Ascending aorta (tissue), 2 donors: ENCODE measurements at regions of chr5 and their contacts with region 1.

Region 1: GRCh38 chr5:142699184-142699720 is 13.4 kb upstream of the FGF1 start:
- DNase-seq: peak; percentile 45 to 95
- H3K4me3 ChIP-seq: no peak overlapping the region
- H3K27ac ChIP-seq: peak overlapping the region in 1 of 2 donors; percentile 73
- H3K4me1 ChIP-seq: peaks cover 3 to 30% of the 10 kb centered on the region in 2 donors
- H3K27me3 ChIP-seq: no peaks in the 10 kb centered on the region
- CTCF ChIP-seq: peak; percentile 96 to 97 (median 96)

Region 2: GRCh38 chr5:141992349-141992963 is 706.8 kb before region 1 on chr5:
- intact Hi-C with region 1: loop called (anchors 10 kb)
- DNase-seq: peak in 1 of 2 donors; percentile 83
- H3K4me3 ChIP-seq: no peak overlapping the region
- H3K27ac ChIP-seq: no peak overlapping the region
- H3K4me1 ChIP-seq: no peaks in the 10 kb centered on the region
- H3K27me3 ChIP-seq: no peaks in the 10 kb centered on the region
- CTCF ChIP-seq: peak; percentile 54 to 80 (median 72)

Region 3: DNA sequence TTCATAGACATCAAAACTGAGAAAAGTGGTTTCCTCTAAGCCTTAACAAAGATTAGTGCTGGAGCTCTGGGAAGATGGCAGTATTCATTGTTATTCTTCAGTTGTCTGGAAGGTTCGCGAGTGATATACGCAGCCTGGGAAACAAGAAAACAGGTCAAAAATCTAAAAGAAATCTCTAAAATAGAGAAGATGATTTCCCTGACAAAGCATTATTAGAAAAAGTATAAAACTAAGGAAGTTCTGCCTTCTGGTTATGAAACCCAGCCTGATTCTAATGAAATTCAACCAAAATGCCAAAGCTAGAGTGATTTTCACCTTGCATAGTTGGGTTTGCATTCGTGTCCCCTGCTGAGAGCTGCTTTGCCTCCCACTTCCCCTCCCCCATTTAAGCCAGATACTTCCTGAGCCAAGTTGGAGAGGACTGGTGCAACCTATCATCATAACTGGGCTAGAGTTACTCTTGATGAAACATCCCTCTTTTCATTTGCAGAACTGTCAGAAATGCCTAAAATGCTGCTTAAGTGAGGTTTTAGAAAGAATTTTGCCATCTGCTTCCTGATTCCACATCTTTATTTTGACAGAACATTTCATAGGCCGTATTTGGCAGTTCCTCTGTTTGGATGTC is 542.3 kb before region 1 on chr5:
- intact Hi-C with region 1: loop called (anchors 5 kb)
- DNase-seq: no peak
- H3K4me3 ChIP-seq: no peak overlapping the region
- H3K27ac ChIP-seq: no peak overlapping the region
- H3K4me1 ChIP-seq: peaks cover 0 to 7% of the 10 kb centered on the region in 2 donors
- H3K27me3 ChIP-seq: no peaks in the 10 kb centered on the region
- CTCF ChIP-seq: no peak

Region 4: GRCh38 chr5:142334538-142334937 is 364.7 kb before region 1 on chr5:
- intact Hi-C with region 1: no loop called
- DNase-seq: no peak
- H3K4me3 ChIP-seq: no peak overlapping the region
- H3K27ac ChIP-seq: no peak overlapping the region
- H3K4me1 ChIP-seq: no peaks in the 10 kb centered on the region
- H3K27me3 ChIP-seq: no peaks in the 10 kb centered on the region
- CTCF ChIP-seq: no peak

Region 5: GRCh38 chr5:142611154-142611553 is 88.1 kb before region 1 on chr5:
- intact Hi-C with region 1: loop called (anchors 1 kb)
- DNase-seq: peak; percentile 28 to 88
- H3K4me3 ChIP-seq: no peak overlapping the region
- H3K27ac ChIP-seq: no peak overlapping the region
- H3K4me1 ChIP-seq: no peaks in the 10 kb centered on the region
- H3K27me3 ChIP-seq: no peaks in the 10 kb centered on the region
- CTCF ChIP-seq: peak; percentile 81 to 98 (median 98)

Region 6: GRCh38 chr5:142655339-142656267 is 43.6 kb before region 1 on chr5:
- intact Hi-C with region 1: loop called (anchors 1 kb)
- DNase-seq: peak; percentile 33 to 93
- H3K4me3 ChIP-seq: peak overlapping the region in 1 of 2 donors; percentile 9
- H3K27ac ChIP-seq: peak overlapping the region; percentile 61 to 71
- H3K4me1 ChIP-seq: peaks cover 0 to 8% of the 10 kb centered on the region in 2 donors
- H3K27me3 ChIP-seq: no peaks in the 10 kb centered on the region
- CTCF ChIP-seq: peak; percentile 94 to 99 (median 97)

Region 7: DNA sequence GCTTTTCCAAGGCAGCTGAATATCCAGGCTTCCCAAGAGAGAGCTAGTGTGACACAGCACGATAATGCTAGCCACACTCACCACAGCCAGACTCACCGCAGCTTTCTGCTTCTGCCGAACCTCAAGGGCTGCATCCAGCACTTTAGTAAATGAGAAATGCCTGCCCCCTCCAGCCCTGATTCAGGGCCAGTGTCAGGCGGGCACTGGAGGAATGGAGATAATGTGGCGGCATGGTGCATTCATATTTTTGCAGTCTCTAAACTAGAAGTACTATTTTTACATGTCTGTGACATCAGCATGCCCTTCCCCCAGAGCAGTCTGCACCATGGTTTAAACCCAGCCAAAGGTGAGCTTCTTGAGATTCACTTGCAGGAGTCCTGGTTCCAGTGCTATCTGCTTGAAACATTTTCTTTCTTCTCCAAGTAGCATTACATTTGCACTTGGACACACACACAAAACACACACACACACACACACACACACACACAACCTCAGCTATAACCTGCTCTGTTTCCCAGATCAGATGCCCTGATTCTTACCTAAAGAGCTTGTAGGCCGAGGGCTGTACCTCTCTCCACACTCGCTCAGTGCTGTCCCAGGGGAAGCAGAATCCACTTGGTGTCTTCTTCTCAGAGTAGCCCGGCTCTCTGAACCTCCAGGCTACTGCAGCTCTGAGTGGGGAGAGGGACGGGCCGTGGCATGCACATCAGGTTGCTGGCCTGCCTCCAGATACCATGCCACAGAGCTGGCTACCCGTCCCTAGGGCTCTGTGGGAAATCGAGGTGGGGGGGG is 13.6 kb before region 1 on chr5 and contains the start of gene FGF1:
- intact Hi-C with region 1: loop called (anchors 1 kb)
- DNase-seq: peak in 1 of 2 donors; percentile 68
- H3K4me3 ChIP-seq: peak within 1 kb of the TSS in 1 of 2 donors; percentile 36
- H3K27ac ChIP-seq: peak within 1 kb of the TSS; percentile 73 to 78
- H3K4me1 ChIP-seq: peaks cover 3 to 17% of the 10 kb centered on the region in 2 donors
- H3K27me3 ChIP-seq: no peaks in the 10 kb centered on the region
- CTCF ChIP-seq: no peak
- total RNA-seq, gene FGF1: 23.5 TPM